IMR-90 (cell line): ENCODE measurements at regions of chr16 and their contacts with region 1.

Region 1: GRCh38 chr16:82603784-82604411 is 22.9 kb upstream of the CDH13 start:
- DNase-seq: peak; percentile 73
- ATAC-seq: peak; percentile 98
- H3K4me3 ChIP-seq: no peak overlapping the region
- H3K27ac ChIP-seq: no peak overlapping the region
- H3K4me1 ChIP-seq: no peaks in the 10 kb centered on the region
- H3K27me3 ChIP-seq: peaks cover 17% of the 10 kb centered on the region
- CTCF ChIP-seq: peak; percentile 81
- POLR2A ChIP-seq: no peak
- RAD21 ChIP-seq: peak; percentile 82

Region 2: DNA sequence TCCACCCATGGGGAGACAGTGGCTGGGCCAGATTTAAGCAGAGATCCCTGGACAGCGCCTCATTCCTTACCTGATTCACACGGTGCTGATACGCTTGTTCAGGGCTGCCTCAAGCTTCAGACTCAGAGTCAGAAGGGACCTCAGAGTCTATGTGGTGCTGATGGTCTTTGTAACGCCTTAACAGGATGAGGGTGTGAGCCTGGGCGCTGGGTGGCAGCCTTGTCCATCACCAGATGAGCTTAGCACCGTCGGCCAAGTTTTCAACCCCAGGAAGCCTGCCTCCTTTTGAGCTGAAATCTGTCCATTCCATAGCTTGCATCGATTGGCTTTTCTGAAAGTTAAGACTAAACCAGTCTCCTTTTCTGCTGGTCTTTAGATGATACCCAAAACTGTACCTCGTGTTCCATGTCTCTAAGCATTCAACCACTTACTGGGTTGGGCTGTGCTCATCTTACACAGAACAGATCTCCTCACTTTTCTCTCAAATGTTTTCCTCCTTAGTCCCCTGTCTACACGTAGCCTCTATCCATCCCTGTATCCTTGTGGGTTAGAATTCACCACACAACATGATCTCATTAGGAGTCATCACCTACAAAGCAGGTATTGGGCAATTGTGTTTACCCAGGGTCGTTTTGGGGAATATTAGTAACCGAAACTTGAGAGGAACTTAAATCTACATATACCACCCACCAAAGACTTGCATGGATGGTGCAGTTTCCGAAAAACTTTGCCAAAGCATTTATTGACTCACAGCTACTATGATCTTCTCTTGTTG is 596.3 kb after region 1 on chr16:
- CTCF ChIA-PET with region 1: no interaction called
- POLR2A ChIA-PET with region 1: no interaction called
- dilution Hi-C with region 1: no loop called
- in situ Hi-C with region 1: loop called (anchors 10 kb)
- intact Hi-C with region 1: no loop called
- DNase-seq: peak; percentile 22
- ATAC-seq: no peak
- H3K4me3 ChIP-seq: no peak overlapping the region
- H3K27ac ChIP-seq: no peak overlapping the region
- H3K4me1 ChIP-seq: no peaks in the 10 kb centered on the region
- H3K27me3 ChIP-seq: no peaks in the 10 kb centered on the region
- CTCF ChIP-seq: no peak
- POLR2A ChIP-seq: no peak
- RAD21 ChIP-seq: no peak

Region 3: DNA sequence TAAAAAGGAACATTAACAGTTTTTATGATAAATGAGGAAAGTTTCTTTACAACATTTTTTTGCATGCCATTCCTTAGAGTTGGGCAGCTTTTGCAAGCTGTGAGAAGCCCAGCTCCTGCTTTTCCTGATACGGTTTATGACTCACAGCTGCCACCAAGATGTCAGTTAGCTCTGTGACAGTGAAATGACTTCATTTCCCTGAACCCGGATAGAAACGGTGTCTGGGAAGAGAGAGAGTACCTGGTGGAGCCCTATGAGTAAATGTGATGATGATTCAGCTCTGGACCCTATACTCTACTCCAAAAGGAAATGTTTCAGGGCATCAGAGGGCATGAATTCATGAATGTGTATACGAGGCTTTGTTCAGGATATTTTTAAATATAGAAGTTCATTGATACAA is 837.6 kb after region 1 on chr16:
- CTCF ChIA-PET with region 1: no interaction called
- POLR2A ChIA-PET with region 1: no interaction called
- dilution Hi-C with region 1: no loop called
- in situ Hi-C with region 1: loop called (anchors 25 kb)
- intact Hi-C with region 1: loop called (anchors 2 kb)
- DNase-seq: peak; percentile 10
- ATAC-seq: no peak
- H3K4me3 ChIP-seq: no peak overlapping the region
- H3K27ac ChIP-seq: no peak overlapping the region
- H3K4me1 ChIP-seq: no peaks in the 10 kb centered on the region
- H3K27me3 ChIP-seq: no peaks in the 10 kb centered on the region
- CTCF ChIP-seq: no peak
- POLR2A ChIP-seq: no peak
- RAD21 ChIP-seq: no peak